PC-9 (cell line): ENCODE measurements at regions of chr1 and their contacts with region 1.

Region 1: DNA sequence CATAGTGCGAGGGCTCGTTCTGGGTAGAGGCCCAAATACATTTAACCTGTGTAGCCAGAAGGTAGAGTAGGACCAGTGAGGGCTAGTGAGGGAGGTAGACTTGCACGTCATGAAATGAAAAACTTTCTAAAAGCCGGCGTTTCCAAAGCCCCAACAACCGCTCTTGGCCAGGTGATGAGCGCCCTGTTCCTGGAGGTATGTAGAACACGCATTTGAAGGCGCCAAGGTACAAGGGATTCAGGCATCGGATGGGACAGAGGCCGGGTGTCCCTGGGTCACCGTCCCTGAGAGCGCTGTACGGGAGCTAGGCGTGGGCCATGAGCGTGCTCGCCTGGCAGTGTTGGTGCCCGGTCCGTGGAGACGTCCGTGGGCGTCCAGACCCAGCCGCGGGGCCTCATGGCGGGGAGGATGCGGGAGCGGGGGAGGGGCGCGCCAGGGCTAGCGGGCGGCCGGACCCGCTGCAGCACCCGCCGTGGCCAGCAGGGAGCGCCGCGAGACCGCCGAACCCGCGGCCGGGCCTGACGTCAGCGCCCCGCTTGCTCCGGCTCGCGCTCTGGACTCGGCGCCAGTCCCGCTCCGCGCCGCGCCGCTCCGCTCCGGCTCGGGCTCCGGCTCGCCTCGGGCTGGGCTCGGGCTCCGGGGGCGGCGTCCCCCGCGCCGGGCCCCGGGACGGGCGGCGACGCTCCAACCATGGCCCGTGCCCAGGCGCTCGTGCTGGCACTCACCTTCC is at the start of gene PTPRU:
- DNase-seq: peak in 1 of 2 experiments; percentile 83
- H3K4me3 ChIP-seq: peak within 1 kb of the TSS; percentile 97
- H3K27ac ChIP-seq: peak within 1 kb of the TSS; percentile 72
- H3K4me1 ChIP-seq: peaks cover 23% of the 10 kb centered on the region
- H3K27me3 ChIP-seq: no peaks in the 10 kb centered on the region
- CTCF ChIP-seq: peak; percentile 37; the same call in 1 of the 2 replicates
- total RNA-seq, gene PTPRU: 31.4 and 44.3 TPM in 2 replicates

Region 2: GRCh38 chr1:28518000-28518744 is 717.9 kb before region 1 on chr1:
- CTCF ChIA-PET with region 1: no interaction called
- POLR2A ChIA-PET with region 1: interaction called, 17 read pairs
- intact Hi-C with region 1: no loop called
- DNase-seq: peak; percentile 66 to 93
- H3K4me3 ChIP-seq: peak overlapping the region; percentile 93
- H3K27ac ChIP-seq: peak overlapping the region; percentile 78
- H3K4me1 ChIP-seq: peaks cover 19% of the 10 kb centered on the region
- H3K27me3 ChIP-seq: no peaks in the 10 kb centered on the region
- CTCF ChIP-seq: peak; percentile 94

Region 3: DNA sequence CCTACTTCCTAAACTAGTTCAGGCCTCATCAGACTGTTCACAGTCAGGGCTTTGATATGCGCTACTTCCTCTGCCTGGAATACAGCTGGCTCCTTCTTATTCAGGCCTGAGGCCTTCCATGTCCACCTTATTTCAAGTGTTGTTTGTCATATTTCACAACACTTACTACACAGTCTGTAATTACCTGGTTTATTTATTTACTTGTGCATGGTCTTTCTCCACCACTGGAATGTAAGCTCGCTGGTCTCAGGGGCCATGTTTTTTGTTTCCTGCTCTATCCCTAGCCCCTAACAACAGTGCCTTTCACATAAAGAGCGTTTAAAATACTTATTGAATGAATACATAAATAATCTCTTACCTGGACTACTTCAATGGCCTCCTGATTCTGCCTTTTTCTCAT is 49.9 kb before region 1 on chr1:
- CTCF ChIA-PET with region 1: no interaction called
- POLR2A ChIA-PET with region 1: no interaction called
- intact Hi-C with region 1: no loop called
- DNase-seq: peak in 1 of 2 experiments; percentile 88
- H3K4me3 ChIP-seq: no peak overlapping the region
- H3K27ac ChIP-seq: peak overlapping the region; percentile 61
- H3K4me1 ChIP-seq: peaks cover 21% of the 10 kb centered on the region
- H3K27me3 ChIP-seq: no peaks in the 10 kb centered on the region
- CTCF ChIP-seq: no peak

Region 4: GRCh38 chr1:29297450-29297849 is 61.3 kb after region 1 on chr1:
- CTCF ChIA-PET with region 1: no interaction called
- POLR2A ChIA-PET with region 1: no interaction called
- intact Hi-C with region 1: loop called (anchors 1 kb)
- DNase-seq: no peak
- H3K4me3 ChIP-seq: no peak overlapping the region
- H3K27ac ChIP-seq: no peak overlapping the region
- H3K4me1 ChIP-seq: peaks cover under 1% of the 10 kb centered on the region; the same call in 1 of the 2 replicates
- H3K27me3 ChIP-seq: no peaks in the 10 kb centered on the region
- CTCF ChIP-seq: no peak

Region 5: GRCh38 chr1:29341936-29342335 is 105.8 kb after region 1 on chr1:
- CTCF ChIA-PET with region 1: interaction called, 5 read pairs
- POLR2A ChIA-PET with region 1: interaction called, 13 read pairs
- intact Hi-C with region 1: loop called (anchors 2 kb)
- DNase-seq: no peak
- H3K4me3 ChIP-seq: no peak overlapping the region
- H3K27ac ChIP-seq: no peak overlapping the region
- H3K4me1 ChIP-seq: no peaks in the 10 kb centered on the region
- H3K27me3 ChIP-seq: no peaks in the 10 kb centered on the region; the same call in 1 of the 2 replicates
- CTCF ChIP-seq: no peak; the same call in 1 of the 2 replicates

Region 6: DNA sequence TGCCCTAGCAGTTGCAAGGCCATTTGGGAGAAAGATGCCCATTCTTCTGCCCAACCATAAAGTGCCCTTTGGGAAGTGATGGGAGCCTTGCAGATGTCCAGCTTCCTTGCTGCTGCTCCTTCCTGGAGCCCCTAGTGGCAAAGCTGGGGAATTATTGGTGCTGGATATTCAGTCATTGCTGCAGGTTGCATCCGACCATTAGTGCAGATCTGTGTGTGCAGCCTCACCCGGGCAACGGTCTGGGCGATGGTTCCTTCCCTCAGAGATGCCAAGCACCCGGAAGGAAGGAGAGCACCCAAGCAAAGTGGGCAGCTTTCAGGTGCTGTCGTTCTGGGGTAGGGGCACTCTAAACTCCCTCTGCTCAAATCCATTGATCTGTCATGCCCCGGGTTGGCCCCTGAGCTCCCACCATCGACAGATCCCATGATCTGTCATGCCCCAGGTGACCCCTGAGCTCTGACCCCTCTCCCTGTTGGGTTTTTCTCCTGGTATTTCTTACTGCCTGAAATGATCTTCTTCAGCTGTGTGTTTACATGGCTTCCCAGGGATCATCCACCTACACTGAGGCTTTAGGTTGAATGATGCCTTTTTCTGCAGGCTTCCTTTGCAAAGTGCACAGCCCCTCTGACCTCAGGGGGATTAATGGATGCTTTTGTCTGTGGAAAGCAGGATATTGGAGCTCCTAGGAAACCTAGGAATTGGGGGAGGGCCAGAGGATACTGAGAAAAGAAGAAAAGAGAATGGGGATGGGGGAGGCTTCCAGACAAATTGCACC is 467.7 kb after region 1 on chr1:
- CTCF ChIA-PET with region 1: no interaction called
- POLR2A ChIA-PET with region 1: no interaction called
- intact Hi-C with region 1: loop called (anchors 5 kb)
- DNase-seq: peak; percentile 19 to 41
- H3K4me3 ChIP-seq: no peak overlapping the region
- H3K27ac ChIP-seq: no peak overlapping the region
- H3K4me1 ChIP-seq: peaks cover 11% of the 10 kb centered on the region
- H3K27me3 ChIP-seq: no peaks in the 10 kb centered on the region
- CTCF ChIP-seq: peak; percentile 79